ENCODE measurements at regions of chr4 and their contacts with region 1.

Region 1: GRCh38 chr4:184514121-184514988 is 40.0 kb upstream of the IRF2 start:
- DNase-seq: peak; percentile 84
- H3K4me3 Mint-ChIP-seq: peak overlapping the region; percentile 65
- H3K27ac Mint-ChIP-seq: peak overlapping the region; percentile 84
- H3K4me1 Mint-ChIP-seq: peaks cover 40% of the 10 kb centered on the region
- H3K27me3 Mint-ChIP-seq: no peaks in the 10 kb centered on the region

Region 2: DNA sequence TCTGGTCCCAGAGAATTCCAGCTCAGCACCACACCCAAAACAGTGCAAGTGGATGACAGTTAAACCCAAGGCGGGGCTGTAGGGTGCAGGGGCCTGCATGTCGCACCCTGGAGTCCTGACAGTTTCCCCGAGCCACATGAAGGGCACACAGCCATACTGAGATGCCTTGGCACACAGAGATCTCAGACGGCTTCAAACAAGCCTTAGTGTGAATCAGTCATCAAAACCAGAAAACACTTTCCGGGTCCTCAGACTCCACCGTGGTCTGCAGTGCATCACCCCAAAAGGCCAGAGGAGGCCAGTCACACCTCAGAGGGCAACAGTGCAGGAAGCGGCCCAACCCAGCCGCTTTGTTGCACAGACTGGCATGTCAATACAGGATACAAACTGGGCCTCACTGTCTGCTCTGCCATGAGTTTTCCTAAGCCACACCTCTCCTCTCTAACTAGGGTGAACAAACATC is 232.1 kb before region 1 on chr4:
- intact Hi-C with region 1: loop called (anchors 1 kb)
- DNase-seq: peak; percentile 87
- H3K4me3 Mint-ChIP-seq: peak overlapping the region; percentile 66
- H3K27ac Mint-ChIP-seq: peak overlapping the region; percentile 90
- H3K4me1 Mint-ChIP-seq: peaks cover 62% of the 10 kb centered on the region
- H3K27me3 Mint-ChIP-seq: no peaks in the 10 kb centered on the region

Region 3: DNA sequence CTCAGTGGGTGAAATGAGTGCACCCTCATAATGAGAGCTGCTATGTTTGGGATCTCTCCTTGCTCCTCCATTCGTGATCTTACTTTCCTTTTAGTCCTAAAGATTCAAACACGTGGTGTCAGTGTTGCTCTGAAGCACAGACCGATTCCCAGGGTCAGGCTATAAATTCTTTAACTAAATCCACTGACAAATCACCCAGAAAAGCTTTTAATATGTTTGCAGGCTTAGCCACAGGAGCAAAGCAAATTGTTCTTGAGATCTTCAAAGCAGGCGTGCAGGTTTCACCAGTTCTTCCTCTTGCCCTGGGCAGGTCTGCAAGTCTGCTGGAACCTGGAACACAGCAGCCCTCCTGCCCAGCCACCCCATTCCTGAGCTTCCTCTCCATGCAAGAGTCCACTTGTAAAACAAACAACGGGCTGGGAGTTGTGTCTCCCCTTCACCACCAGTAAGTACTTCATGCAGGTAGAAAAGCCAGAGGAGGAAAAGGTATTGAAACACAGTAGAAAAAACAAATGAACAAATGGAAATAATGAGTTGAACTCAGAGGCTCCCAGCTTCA is 226.6 kb before region 1 on chr4:
- intact Hi-C with region 1: loop called (anchors 1 kb)
- DNase-seq: peak; percentile 64
- H3K4me3 Mint-ChIP-seq: peak overlapping the region; percentile 57
- H3K27ac Mint-ChIP-seq: peak overlapping the region; percentile 89
- H3K4me1 Mint-ChIP-seq: peaks cover 45% of the 10 kb centered on the region
- H3K27me3 Mint-ChIP-seq: no peaks in the 10 kb centered on the region

Region 4: DNA sequence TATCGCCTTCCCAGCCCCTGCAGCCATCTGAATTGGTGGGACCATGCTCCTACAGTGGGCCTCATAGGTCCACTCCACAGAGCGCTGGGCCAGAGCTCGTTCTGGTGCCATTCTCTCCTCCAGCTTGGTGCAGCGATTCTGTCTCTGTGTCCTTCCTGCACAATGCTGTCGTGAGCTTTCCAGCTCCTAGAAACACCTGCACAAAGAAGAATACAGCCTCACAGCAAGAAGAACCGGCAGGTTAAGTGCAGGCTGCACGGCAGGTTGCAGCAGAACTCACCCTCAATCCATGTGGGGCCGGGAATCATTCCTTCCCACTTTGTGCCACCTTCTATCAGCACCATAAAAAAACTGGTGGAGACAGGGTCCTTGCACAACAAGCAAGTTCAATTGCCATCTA is 195.5 kb before region 1 on chr4:
- intact Hi-C with region 1: loop called (anchors 1 kb)
- DNase-seq: peak; percentile 56
- H3K4me3 Mint-ChIP-seq: peak overlapping the region; percentile 21
- H3K27ac Mint-ChIP-seq: peak overlapping the region; percentile 93
- H3K4me1 Mint-ChIP-seq: peaks cover 50% of the 10 kb centered on the region
- H3K27me3 Mint-ChIP-seq: no peaks in the 10 kb centered on the region

Region 5: GRCh38 chr4:184575306-184575705 is 61.0 kb after region 1 on chr4:
- intact Hi-C with region 1: loop called (anchors 1 kb)
- DNase-seq: no peak
- H3K4me3 Mint-ChIP-seq: no peak overlapping the region
- H3K27ac Mint-ChIP-seq: peak overlapping the region; percentile 77
- H3K4me1 Mint-ChIP-seq: peaks cover 14% of the 10 kb centered on the region
- H3K27me3 Mint-ChIP-seq: no peaks in the 10 kb centered on the region

Measured in activated CD4-positive, alpha-beta T cell treated with anti-CD3 and anti-CD28 coated beads, Interleukin-2, amount 10 ng/mL, durations not matched to agents 24 days and 14 days (primary cell).